ENCODE measurements at regions of chr2 and their contacts with region 1.

Region 1: DNA sequence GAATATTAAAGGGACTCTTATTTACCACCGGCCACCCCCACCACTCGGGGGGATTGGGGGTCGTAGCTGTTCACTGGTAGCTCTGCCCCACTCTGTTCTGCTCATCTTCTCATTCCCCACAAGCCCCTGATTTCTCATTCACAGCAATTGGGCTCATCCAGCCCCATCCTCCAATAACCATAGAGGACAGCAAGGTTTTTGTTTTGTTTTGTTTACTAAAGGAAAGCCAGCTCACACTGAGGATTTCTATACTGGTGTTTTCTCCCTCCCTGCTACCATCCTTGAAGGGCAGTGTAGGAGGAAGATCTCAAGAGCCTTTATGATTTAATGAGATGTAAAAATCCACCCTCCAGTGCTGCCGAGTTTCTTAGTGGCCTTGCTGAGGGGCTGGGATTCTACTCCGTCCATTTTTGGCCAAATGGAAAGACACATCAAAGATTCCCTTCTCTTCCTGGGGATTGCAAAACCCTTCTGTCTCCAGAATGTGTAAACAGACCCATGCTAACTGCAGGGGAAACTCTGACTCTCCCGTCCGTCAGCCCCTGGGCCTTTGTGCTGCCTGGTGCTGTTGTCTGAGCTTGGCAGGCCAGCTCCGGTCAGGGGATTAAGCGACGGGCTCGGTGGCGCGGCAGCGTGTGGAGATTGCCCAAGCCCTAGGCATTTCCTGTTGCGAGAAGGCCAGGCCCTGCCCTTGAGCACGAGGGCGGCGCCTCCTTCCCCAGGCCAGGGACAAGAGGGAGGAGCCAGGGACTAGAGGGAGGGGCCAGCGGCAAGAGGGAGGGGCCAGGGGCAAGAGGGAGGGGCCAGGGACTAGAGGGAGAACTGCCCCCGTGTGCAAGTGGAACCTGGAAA is 165.0 kb downstream of the ANTXR1 start:
- DNase-seq: peak; percentile 92
- ATAC-seq: peak; percentile 89
- H3K4me3 ChIP-seq: no peak overlapping the region; the same call in 1 of the 2 replicates
- H3K27ac ChIP-seq: peak overlapping the region; percentile 88
- H3K4me1 ChIP-seq: peaks cover 22% of the 10 kb centered on the region
- H3K27me3 ChIP-seq: no peaks in the 10 kb centered on the region
- CTCF ChIP-seq: no peak
- POLR2A ChIP-seq: peak; percentile 75; the same call in 1 of the 2 replicates
- RAD21 ChIP-seq: peak; percentile 23; the same call in 1 of the 2 replicates

Region 2: GRCh38 chr2:69163109-69163508 is 14.9 kb before region 1 on chr2:
- CTCF ChIA-PET with region 1: interaction called, 3 read pairs
- POLR2A ChIA-PET with region 1: interaction called, 12 read pairs
- dilution Hi-C with region 1: no loop called
- in situ Hi-C with region 1: no loop called
- intact Hi-C with region 1: no loop called
- DNase-seq: peak; percentile 88
- ATAC-seq: 0 out of 2 replicates have a peak, but pooled peaks have one; percentile 40
- H3K4me3 ChIP-seq: no peak overlapping the region
- H3K27ac ChIP-seq: peak overlapping the region; percentile 27
- H3K4me1 ChIP-seq: peaks cover 21% of the 10 kb centered on the region
- H3K27me3 ChIP-seq: no peaks in the 10 kb centered on the region
- CTCF ChIP-seq: no peak
- POLR2A ChIP-seq: no peak
- RAD21 ChIP-seq: peak; percentile 15; the same call in 1 of the 2 replicates

Region 3: DNA sequence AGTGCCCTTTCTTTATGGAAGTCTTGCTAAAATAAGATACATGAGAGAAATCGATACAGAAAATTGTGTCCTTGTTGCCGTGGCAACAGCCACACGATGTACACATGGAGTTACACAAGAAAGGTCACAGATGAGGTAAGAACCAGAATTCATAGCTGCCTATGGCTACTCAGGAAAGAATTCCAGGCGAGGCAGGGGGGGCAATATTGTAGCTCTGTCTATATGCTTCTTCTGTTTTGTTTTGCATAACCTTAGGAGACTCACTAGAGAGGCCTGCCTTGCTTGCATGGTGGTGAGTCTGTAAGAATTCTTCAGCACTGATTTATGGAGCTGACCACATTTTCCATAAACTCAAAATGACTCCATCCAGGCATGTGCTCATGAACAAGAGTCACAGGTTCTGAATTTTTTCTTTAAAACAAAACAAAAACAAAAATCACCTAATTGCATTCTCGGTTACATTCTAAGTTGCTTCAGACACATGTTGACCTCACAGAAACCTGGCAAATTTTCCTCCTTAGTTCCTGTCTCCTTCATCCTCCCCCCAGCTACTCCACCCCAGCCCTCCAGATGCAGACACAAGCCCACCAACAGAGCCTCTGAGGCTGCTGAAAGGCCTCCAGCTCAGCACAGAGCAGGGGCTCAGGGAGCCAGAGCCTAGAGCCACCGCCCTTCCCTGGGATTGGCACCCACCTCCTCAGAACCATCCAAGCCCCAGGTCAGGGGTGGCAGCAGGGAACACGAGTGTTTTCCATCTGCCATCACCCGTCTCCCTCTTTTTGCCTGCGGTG is 18.5 kb after region 1 on chr2:
- CTCF ChIA-PET with region 1: no interaction called
- POLR2A ChIA-PET with region 1: no interaction called
- dilution Hi-C with region 1: no loop called
- in situ Hi-C with region 1: no loop called
- intact Hi-C with region 1: loop called (anchors 1 kb)
- DNase-seq: peak; percentile 98
- ATAC-seq: peak; percentile 77
- H3K4me3 ChIP-seq: no peak overlapping the region
- H3K27ac ChIP-seq: peak overlapping the region; percentile 98
- H3K4me1 ChIP-seq: peaks cover 22% of the 10 kb centered on the region
- H3K27me3 ChIP-seq: no peaks in the 10 kb centered on the region
- CTCF ChIP-seq: no peak
- POLR2A ChIP-seq: 0 out of 2 replicates have a peak, but pooled peaks have one; percentile 35
- RAD21 ChIP-seq: peak; percentile 33

Region 4: DNA sequence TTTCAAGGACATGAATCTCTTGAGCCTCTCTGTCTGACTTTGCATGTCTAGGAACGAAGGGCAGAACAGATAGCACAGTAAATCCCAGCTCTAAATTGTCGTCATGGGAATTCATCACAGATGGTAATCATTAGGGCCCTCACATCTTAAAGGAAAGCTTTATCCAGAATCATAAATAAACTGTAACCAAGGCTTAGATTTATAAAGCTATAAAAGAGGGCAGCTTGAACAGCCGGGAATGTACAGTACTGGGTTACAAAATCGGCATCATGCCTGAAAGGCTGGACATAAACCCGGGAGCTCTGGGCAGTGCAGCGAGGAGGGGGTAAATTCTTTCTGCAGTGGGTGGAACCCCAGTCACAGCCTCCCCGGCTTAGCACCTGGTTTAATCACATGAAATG is 64.6 kb after region 1 on chr2:
- CTCF ChIA-PET with region 1: interaction called, 3 read pairs
- POLR2A ChIA-PET with region 1: interaction called, 3 read pairs
- dilution Hi-C with region 1: no loop called
- in situ Hi-C with region 1: no loop called
- intact Hi-C with region 1: loop called (anchors 1 kb)
- DNase-seq: peak; percentile 86
- ATAC-seq: peak; percentile 81
- H3K4me3 ChIP-seq: no peak overlapping the region
- H3K27ac ChIP-seq: peak overlapping the region; percentile 98
- H3K4me1 ChIP-seq: peaks cover 41% of the 10 kb centered on the region
- H3K27me3 ChIP-seq: no peaks in the 10 kb centered on the region
- CTCF ChIP-seq: no peak
- POLR2A ChIP-seq: no peak
- RAD21 ChIP-seq: no peak

Measured in IMR-90 (cell line).